ENCODE measurements at regions of chr10 and their contacts with region 1.

Region 1: GRCh38 chr10:93496322-93497041 is at the start of gene CEP55:
- DNase-seq: peak; percentile 89 to 97 (median 94)
- ATAC-seq: peak; percentile 99
- H3K4me3 ChIP-seq: peak within 1 kb of the TSS; percentile 95
- H3K4me3 Mint-ChIP-seq: peak within 1 kb of the TSS; percentile 95
- H3K27ac ChIP-seq: no peak within 1 kb of the TSS
- H3K27ac Mint-ChIP-seq: peak within 1 kb of the TSS; percentile 46
- H3K4me1 ChIP-seq: peaks cover 17% of the 10 kb centered on the region
- H3K4me1 Mint-ChIP-seq: peaks cover 4% of the 10 kb centered on the region
- H3K27me3 ChIP-seq: no peaks in the 10 kb centered on the region
- H3K27me3 Mint-ChIP-seq: peaks cover 5% of the 10 kb centered on the region
- CTCF ChIP-seq: no peak
- total RNA-seq, gene CEP55: 0.16 to 0.17 TPM

Region 2: GRCh38 chr10:92290837-92291615 is 1205.5 kb before region 1 on chr10 and contains the starts of genes CPEB3 and MARCHF5:
- CTCF ChIA-PET with region 1: no interaction called
- POLR2A ChIA-PET with region 1: no interaction called
- intact Hi-C with region 1: loop called in 1 of 2 experiments (anchors 10 kb)
- DNase-seq: peak; percentile 80 to 97 (median 87)
- ATAC-seq: peak; percentile 97
- H3K4me3 ChIP-seq: peak within 1 kb of the TSS; percentile 97
- H3K4me3 Mint-ChIP-seq: peak within 1 kb of the TSS; percentile 97
- H3K27ac ChIP-seq: peak within 1 kb of the TSS; percentile 37 to 50
- H3K27ac Mint-ChIP-seq: peak within 1 kb of the TSS; percentile 87
- H3K4me1 ChIP-seq: peaks cover 29% of the 10 kb centered on the region
- H3K4me1 Mint-ChIP-seq: peaks cover 33% of the 10 kb centered on the region
- H3K27me3 ChIP-seq: no peaks in the 10 kb centered on the region
- H3K27me3 Mint-ChIP-seq: no peaks in the 10 kb centered on the region
- CTCF ChIP-seq: peak; percentile 44
- total RNA-seq, gene CPEB3: 1.2 to 1.3 TPM
- total RNA-seq, gene MARCHF5: 33.5 to 36.1 TPM

Region 3: GRCh38 chr10:93376372-93377293 is 119.8 kb before region 1 on chr10:
- CTCF ChIA-PET with region 1: interaction called, 13 read pairs
- POLR2A ChIA-PET with region 1: interaction called, 3 read pairs
- intact Hi-C with region 1: loop called in 1 of 2 experiments (anchors 5 kb)
- DNase-seq: peak in 10 of 14 experiments; percentile 8 to 84 (median 28)
- ATAC-seq: peak; percentile 84
- H3K4me3 ChIP-seq: no peak overlapping the region
- H3K4me3 Mint-ChIP-seq: no peak overlapping the region
- H3K27ac ChIP-seq: no peak overlapping the region
- H3K27ac Mint-ChIP-seq: no peak overlapping the region
- H3K4me1 ChIP-seq: peaks cover 5% of the 10 kb centered on the region
- H3K4me1 Mint-ChIP-seq: peaks cover 7% of the 10 kb centered on the region
- H3K27me3 ChIP-seq: no peaks in the 10 kb centered on the region
- H3K27me3 Mint-ChIP-seq: peaks cover 13% of the 10 kb centered on the region
- CTCF ChIP-seq: peak; percentile 96

Region 4: GRCh38 chr10:93475861-93476269 is 20.6 kb before region 1 on chr10:
- CTCF ChIA-PET with region 1: no interaction called
- POLR2A ChIA-PET with region 1: no interaction called
- intact Hi-C with region 1: no loop called
- DNase-seq: peak in 1 of 14 experiments; percentile 42
- ATAC-seq: no peak
- H3K4me3 ChIP-seq: no peak overlapping the region
- H3K4me3 Mint-ChIP-seq: no peak overlapping the region
- H3K27ac ChIP-seq: no peak overlapping the region
- H3K27ac Mint-ChIP-seq: no peak overlapping the region
- H3K4me1 ChIP-seq: no peaks in the 10 kb centered on the region
- H3K4me1 Mint-ChIP-seq: no peaks in the 10 kb centered on the region
- H3K27me3 ChIP-seq: no peaks in the 10 kb centered on the region
- H3K27me3 Mint-ChIP-seq: peaks cover 10% of the 10 kb centered on the region
- CTCF ChIP-seq: no peak

Region 5: DNA sequence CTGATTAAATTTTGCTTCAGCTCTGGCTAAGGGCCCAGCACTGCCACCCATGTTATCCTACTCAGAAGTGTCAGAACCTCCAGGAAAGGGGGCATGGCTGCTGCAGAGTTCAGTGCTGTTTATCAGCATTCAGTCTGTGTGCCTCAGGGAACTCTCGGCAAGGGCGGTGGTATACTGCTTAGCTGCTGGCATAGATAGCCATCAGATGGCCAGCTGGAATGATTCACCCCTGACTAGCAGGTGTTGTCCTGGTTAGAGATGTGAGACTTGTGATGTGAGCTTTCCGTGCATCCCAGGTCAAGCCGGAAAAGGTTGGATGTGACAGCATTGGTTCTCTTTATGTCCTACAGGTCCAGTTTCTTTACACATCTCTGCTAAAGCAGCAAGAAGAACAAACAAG is 22.0 kb after region 1 on chr10:
- CTCF ChIA-PET with region 1: no interaction called
- POLR2A ChIA-PET with region 1: no interaction called
- intact Hi-C with region 1: no loop called
- DNase-seq: no peak
- ATAC-seq: no peak
- H3K4me3 ChIP-seq: no peak overlapping the region
- H3K4me3 Mint-ChIP-seq: no peak overlapping the region
- H3K27ac ChIP-seq: no peak overlapping the region
- H3K27ac Mint-ChIP-seq: no peak overlapping the region
- H3K4me1 ChIP-seq: no peaks in the 10 kb centered on the region
- H3K4me1 Mint-ChIP-seq: no peaks in the 10 kb centered on the region
- H3K27me3 ChIP-seq: no peaks in the 10 kb centered on the region
- H3K27me3 Mint-ChIP-seq: no peaks in the 10 kb centered on the region
- CTCF ChIP-seq: no peak

Region 6: GRCh38 chr10:93893646-93894515 is 397.4 kb after region 1 on chr10 and contains the start of gene SLC35G1:
- CTCF ChIA-PET with region 1: no interaction called
- POLR2A ChIA-PET with region 1: no interaction called
- intact Hi-C with region 1: loop called in 1 of 2 experiments (anchors 5 kb)
- DNase-seq: peak; percentile 42 to 87 (median 66)
- ATAC-seq: peak; percentile 91
- H3K4me3 ChIP-seq: peak within 1 kb of the TSS; percentile 68
- H3K4me3 Mint-ChIP-seq: peak within 1 kb of the TSS; percentile 91
- H3K27ac ChIP-seq: no peak within 1 kb of the TSS
- H3K27ac Mint-ChIP-seq: peak within 1 kb of the TSS; percentile 73
- H3K4me1 ChIP-seq: peaks cover 16% of the 10 kb centered on the region
- H3K4me1 Mint-ChIP-seq: peaks cover 47% of the 10 kb centered on the region
- H3K27me3 ChIP-seq: no peaks in the 10 kb centered on the region
- H3K27me3 Mint-ChIP-seq: peaks cover 8% of the 10 kb centered on the region
- CTCF ChIP-seq: no peak
- total RNA-seq, gene SLC35G1: 2.9 to 3.1 TPM

Region 7: DNA sequence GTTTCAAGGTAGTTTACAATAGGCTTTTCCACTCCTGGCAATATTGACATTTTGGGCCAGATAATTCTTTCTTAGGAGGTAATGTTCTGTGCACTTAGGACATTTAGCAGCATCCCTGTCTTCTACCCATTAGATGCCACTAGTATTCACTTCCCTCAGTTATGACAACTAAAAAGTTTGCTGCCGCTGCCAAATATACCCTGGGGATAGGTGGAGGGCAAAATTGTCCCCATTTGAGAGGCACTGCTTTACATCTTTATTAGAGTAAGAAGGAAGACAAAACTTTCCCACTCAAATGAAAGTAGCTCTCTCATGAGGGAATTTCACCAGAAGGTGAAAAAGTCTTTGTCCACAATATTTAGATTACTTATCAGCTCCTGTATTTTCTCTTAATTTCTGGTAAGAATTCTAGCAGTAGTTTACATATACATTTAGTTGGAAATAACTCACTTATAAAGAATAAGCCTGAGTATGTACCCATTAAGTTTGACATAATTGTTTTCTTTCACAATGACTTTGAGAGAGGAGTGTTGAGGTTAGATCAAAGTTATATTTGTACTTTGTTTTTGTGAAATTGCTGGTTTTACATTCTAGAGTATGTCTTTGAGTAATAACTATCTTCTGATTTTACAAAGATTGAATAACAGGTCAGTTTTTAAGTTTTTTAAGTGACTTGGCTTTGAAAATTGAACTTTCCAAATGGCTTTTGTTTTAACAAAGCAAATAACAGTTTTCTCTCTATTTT is 1095.2 kb after region 1 on chr10:
- CTCF ChIA-PET with region 1: no interaction called
- POLR2A ChIA-PET with region 1: no interaction called
- intact Hi-C with region 1: no loop called
- DNase-seq: no peak
- ATAC-seq: no peak
- H3K4me3 ChIP-seq: no peak overlapping the region
- H3K4me3 Mint-ChIP-seq: no peak overlapping the region
- H3K27ac ChIP-seq: no peak overlapping the region
- H3K27ac Mint-ChIP-seq: no peak overlapping the region
- H3K4me1 ChIP-seq: no peaks in the 10 kb centered on the region
- H3K4me1 Mint-ChIP-seq: no peaks in the 10 kb centered on the region
- H3K27me3 ChIP-seq: no peaks in the 10 kb centered on the region
- H3K27me3 Mint-ChIP-seq: no peaks in the 10 kb centered on the region
- CTCF ChIP-seq: no peak

Measured in CD4-positive, alpha-beta T cell (primary cell).